MCF 10A (cell line): ENCODE measurements at regions of chr7 and their contacts with region 1.

Region 1: DNA sequence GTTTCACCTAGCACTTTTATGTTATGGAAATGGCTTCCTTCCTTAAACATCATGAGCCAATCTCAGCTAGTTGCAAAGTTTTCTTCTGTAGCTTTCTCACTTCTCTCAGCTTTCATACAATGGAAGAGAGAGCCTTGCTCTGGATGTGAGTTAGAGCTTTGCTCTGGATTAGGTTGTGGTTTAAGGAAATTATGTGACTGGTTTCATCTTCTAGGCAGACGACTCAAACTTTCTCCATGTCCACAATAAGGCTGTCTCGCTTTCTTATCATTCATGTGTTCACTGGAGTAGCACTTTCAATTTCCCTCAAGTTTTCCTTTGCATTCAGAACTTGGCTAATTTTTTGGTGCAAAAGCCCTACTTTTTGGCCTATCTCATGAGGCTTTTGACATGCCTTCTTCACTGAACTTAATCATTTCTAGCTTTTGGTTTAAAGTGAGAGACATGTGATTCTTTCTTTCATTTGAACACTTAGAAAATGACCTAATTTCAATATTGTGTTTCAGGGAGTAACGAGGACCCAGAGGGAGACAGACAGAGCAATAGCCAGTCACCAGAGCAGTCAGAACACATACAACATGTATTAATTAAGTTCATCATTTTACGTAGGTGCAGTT is 49.8 kb downstream of the CNOT4 start:
- DNase-seq: no peak
- H3K4me3 Mint-ChIP-seq: no peak overlapping the region
- H3K27ac Mint-ChIP-seq: no peak overlapping the region
- H3K4me1 Mint-ChIP-seq: peaks cover under 1% of the 10 kb centered on the region
- H3K27me3 Mint-ChIP-seq: no peaks in the 10 kb centered on the region
- CTCF ChIP-seq: no peak

Region 2: GRCh38 chr7:135447783-135448182 is 12.3 kb before region 1 on chr7:
- CTCF ChIA-PET with region 1: interaction called, 3 read pairs
- POLR2A ChIA-PET with region 1: interaction called, 5 read pairs
- intact Hi-C with region 1: loop called (anchors 1 kb)
- DNase-seq: no peak
- H3K4me3 Mint-ChIP-seq: no peak overlapping the region
- H3K27ac Mint-ChIP-seq: no peak overlapping the region
- H3K4me1 Mint-ChIP-seq: peaks cover 19% of the 10 kb centered on the region
- H3K27me3 Mint-ChIP-seq: no peaks in the 10 kb centered on the region
- CTCF ChIP-seq: no peak

Region 3: DNA sequence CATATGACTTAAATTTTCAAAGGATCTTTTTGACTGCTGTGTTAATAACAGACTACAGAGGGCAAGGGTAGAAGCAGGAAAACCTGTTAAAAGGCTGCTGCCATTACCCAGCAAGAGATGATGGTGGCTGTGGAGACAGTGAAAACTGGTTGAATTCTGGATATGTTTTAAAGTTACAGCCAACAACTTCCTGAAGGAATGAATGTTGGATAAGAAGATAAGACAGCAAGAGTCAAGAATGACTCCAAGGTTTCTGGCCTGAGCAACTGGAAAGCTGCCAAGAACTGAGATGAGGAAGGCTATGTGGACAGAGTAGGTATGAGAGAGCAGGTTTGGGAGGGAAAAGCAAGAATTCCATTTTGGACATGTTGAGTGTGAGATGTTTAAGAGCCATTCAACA is 30.7 kb after region 1 on chr7:
- CTCF ChIA-PET with region 1: no interaction called
- POLR2A ChIA-PET with region 1: no interaction called
- intact Hi-C with region 1: no loop called
- DNase-seq: peak; percentile 72
- H3K4me3 Mint-ChIP-seq: no peak overlapping the region
- H3K27ac Mint-ChIP-seq: no peak overlapping the region
- H3K4me1 Mint-ChIP-seq: peaks cover 20% of the 10 kb centered on the region
- H3K27me3 Mint-ChIP-seq: no peaks in the 10 kb centered on the region
- CTCF ChIP-seq: no peak